BJ (cell line): ENCODE measurements at regions of chr3 and their contacts with region 1.

Region 1: GRCh38 chr3:107235928-107236315 is 141.3 kb upstream of the CCDC54 start:
- DNase-seq: no peak
- H3K4me3 ChIP-seq: peak overlapping the region; percentile 41
- H3K27me3 ChIP-seq: no peaks in the 10 kb centered on the region
- CTCF ChIP-seq: peak; percentile 76

Region 2: GRCh38 chr3:107222907-107223306 is 13.0 kb before region 1 on chr3:
- CTCF ChIA-PET with region 1: interaction called, 18 read pairs
- POLR2A ChIA-PET with region 1: no interaction called
- DNase-seq: peak; percentile 96
- H3K4me3 ChIP-seq: no peak overlapping the region
- H3K27me3 ChIP-seq: no peaks in the 10 kb centered on the region
- CTCF ChIP-seq: no peak

Region 3: GRCh38 chr3:107421170-107421792 is 185.4 kb after region 1 on chr3:
- CTCF ChIA-PET with region 1: interaction called, 15 read pairs
- POLR2A ChIA-PET with region 1: no interaction called
- DNase-seq: no peak
- H3K4me3 ChIP-seq: 0 out of 2 replicates have a peak overlapping the region, but pooled peaks have one; percentile 22
- H3K27me3 ChIP-seq: no peaks in the 10 kb centered on the region
- CTCF ChIP-seq: peak; percentile 65

Region 4: GRCh38 chr3:107429320-107430181 is 193.6 kb after region 1 on chr3:
- CTCF ChIA-PET with region 1: interaction called, 24 read pairs
- POLR2A ChIA-PET with region 1: no interaction called
- DNase-seq: peak; percentile 45
- H3K4me3 ChIP-seq: peak overlapping the region; percentile 42
- H3K27me3 ChIP-seq: no peaks in the 10 kb centered on the region
- CTCF ChIP-seq: peak; percentile 92

Region 5: GRCh38 chr3:107450254-107450893 is 214.5 kb after region 1 on chr3:
- CTCF ChIA-PET with region 1: no interaction called
- POLR2A ChIA-PET with region 1: no interaction called
- DNase-seq: no peak
- H3K4me3 ChIP-seq: no peak overlapping the region
- H3K27me3 ChIP-seq: no peaks in the 10 kb centered on the region
- CTCF ChIP-seq: no peak

Region 6: DNA sequence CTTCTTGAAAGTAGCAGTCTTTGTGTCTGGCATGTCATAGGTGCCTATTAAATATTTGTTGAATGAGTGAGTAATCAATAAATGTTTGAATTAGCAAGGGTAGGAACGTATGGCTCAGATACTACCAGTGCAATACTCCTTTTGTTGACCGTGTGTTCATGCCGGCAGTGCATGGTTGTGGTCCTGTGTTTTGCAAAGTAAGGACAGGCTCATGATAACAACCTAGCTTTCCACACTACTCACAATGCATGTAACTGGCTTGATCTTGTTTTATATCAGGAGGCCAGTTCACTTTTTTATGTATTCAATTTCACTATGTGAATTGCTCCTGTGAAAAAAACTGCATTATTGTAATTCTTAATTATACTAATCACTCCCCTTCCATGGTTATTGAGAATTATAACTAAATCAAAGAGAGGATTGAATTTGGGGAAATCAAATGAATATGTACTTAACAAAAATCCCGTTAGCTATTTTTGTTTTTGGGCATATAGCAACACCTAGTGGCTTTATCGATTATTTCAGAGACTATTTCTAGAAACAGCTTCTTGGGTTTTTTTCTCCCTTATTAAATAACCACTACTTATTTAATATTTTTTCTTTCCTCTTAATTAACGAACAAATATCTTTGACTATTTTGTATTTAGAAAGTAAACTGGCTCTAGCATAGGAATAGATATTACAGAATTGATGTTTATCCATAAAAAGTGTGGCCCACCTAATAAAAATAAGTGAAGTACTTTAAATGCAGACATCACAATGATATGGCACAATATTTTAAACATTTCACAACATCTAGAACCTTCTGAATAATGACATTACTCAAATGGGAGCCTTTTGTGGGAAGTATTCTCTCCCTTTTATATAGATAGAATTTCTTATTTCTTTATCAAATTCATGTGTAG is 505.3 kb after region 1 on chr3:
- CTCF ChIA-PET with region 1: interaction called, 20 read pairs
- POLR2A ChIA-PET with region 1: no interaction called
- DNase-seq: no peak
- H3K4me3 ChIP-seq: no peak overlapping the region
- H3K27me3 ChIP-seq: no peaks in the 10 kb centered on the region
- CTCF ChIP-seq: peak; percentile 46

Region 7: GRCh38 chr3:107846279-107846852 is 610.4 kb after region 1 on chr3:
- CTCF ChIA-PET with region 1: interaction called, 15 read pairs
- POLR2A ChIA-PET with region 1: no interaction called
- DNase-seq: peak; percentile 10
- H3K4me3 ChIP-seq: no peak overlapping the region
- H3K27me3 ChIP-seq: peaks cover 1% of the 10 kb centered on the region; the same call in 1 of the 2 replicates
- CTCF ChIP-seq: peak; percentile 73

Region 8: GRCh38 chr3:108130701-108131474 is 895.0 kb after region 1 on chr3:
- CTCF ChIA-PET with region 1: no interaction called
- POLR2A ChIA-PET with region 1: no interaction called
- DNase-seq: peak; percentile 76
- H3K4me3 ChIP-seq: no peak overlapping the region
- H3K27me3 ChIP-seq: no peaks in the 10 kb centered on the region
- CTCF ChIP-seq: no peak